CD8-positive, alpha-beta memory T cell (primary cell): ENCODE measurements at regions of chr6 and their contacts with region 1.

Region 1: GRCh38 chr6:1524040-1524480 is 85.7 kb upstream of the FOXC1 start:
- DNase-seq: peak; percentile 35 to 77 (median 72)
- H3K4me3 ChIP-seq: peak overlapping the region; percentile 59
- H3K4me3 Mint-ChIP-seq: peak overlapping the region; percentile 58 to 77 (median 70)
- H3K27ac ChIP-seq: no peak overlapping the region
- H3K27ac Mint-ChIP-seq: peak overlapping the region in 7 of 8 donors; percentile 38 to 91 (median 69)
- H3K4me1 ChIP-seq: peaks cover 55% of the 10 kb centered on the region
- H3K4me1 Mint-ChIP-seq: peaks cover 28 to 37% (median 34%) of the 10 kb centered on the region in 3 donors
- H3K27me3 ChIP-seq: no peaks in the 10 kb centered on the region
- H3K27me3 Mint-ChIP-seq: peaks cover 5 to 28% of the 10 kb centered on the region in 2 donors

Region 2: DNA sequence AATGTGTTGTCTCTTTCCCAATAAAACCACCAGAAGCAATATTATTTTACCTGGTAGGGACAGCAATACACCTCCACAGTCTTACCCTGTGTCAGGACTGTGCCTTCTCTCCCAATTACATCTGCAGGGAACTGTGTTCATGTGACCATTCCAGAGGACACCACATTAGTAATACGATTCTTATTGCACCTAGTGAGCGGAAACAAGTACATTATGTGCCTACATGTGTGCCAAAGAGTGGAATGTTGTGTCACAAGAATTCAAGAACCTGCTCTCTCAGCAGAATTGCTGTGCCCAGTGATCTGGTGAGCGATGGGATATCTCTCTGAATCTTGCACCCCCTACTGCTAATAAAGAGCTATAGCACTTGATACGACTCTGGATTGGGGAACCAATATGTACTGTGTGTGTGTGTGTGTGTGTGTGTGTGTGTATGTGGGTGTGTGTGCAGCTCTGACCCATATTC is 28.3 kb after region 1 on chr6:
- CTCF ChIA-PET with region 1: interaction called, 21 read pairs
- POLR2A ChIA-PET with region 1: no interaction called
- DNase-seq: peak in 1 of 5 donors; percentile 18
- H3K4me3 ChIP-seq: no peak overlapping the region
- H3K4me3 Mint-ChIP-seq: no peak overlapping the region
- H3K27ac ChIP-seq: no peak overlapping the region
- H3K27ac Mint-ChIP-seq: peak overlapping the region in 2 of 8 donors; percentile 26 to 57
- H3K4me1 ChIP-seq: no peaks in the 10 kb centered on the region
- H3K4me1 Mint-ChIP-seq: peaks cover 11 to 28% (median 26%) of the 10 kb centered on the region in 3 donors
- H3K27me3 ChIP-seq: no peaks in the 10 kb centered on the region
- H3K27me3 Mint-ChIP-seq: peaks cover 5 to 49% of the 10 kb centered on the region in 2 donors

Region 3: GRCh38 chr6:1558388-1558787 is 34.3 kb after region 1 on chr6:
- CTCF ChIA-PET with region 1: interaction called, 21 read pairs
- POLR2A ChIA-PET with region 1: no interaction called
- DNase-seq: no peak
- H3K4me3 ChIP-seq: no peak overlapping the region
- H3K4me3 Mint-ChIP-seq: no peak overlapping the region
- H3K27ac ChIP-seq: no peak overlapping the region
- H3K27ac Mint-ChIP-seq: no peak overlapping the region
- H3K4me1 ChIP-seq: no peaks in the 10 kb centered on the region
- H3K4me1 Mint-ChIP-seq: peaks cover 11 to 21% (median 19%) of the 10 kb centered on the region in 3 donors
- H3K27me3 ChIP-seq: no peaks in the 10 kb centered on the region
- H3K27me3 Mint-ChIP-seq: peaks cover 7 to 69% of the 10 kb centered on the region in 2 donors

Region 4: DNA sequence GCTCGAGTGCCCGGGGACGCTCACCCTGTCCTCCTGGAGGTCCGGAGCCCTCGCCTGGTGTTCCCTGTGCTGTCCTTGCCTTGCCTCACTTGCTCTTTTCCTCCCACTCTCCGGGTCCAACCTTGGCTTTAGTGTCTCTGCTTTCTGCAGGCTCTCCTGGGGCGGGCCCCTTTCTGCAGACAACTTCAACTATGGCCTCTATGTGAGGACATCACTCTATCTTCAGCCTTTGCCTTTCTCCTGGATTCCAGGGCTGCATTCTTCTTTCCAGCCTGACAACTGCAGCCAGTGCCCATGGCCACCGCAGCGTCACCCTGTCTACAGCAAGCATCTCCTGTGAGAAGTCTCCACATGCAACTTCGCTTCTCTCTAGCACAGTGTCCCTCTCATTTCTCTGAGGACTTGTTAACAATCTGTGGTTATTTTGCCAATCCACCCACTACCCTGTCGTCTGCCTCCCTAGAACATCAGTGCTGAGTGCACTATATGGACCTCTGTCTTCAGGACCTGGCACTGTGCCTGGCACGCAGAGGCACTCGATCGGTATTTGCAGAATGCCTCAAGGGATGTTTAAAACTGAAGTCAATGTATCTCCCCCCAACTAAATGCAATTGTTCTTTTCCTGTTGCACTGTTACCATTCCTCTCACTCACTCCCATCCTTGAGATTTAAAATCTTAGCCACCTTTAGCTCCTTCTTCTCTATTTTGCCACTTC is 121.6 kb after region 1 on chr6:
- CTCF ChIA-PET with region 1: no interaction called
- POLR2A ChIA-PET with region 1: no interaction called
- DNase-seq: no peak
- H3K4me3 ChIP-seq: no peak overlapping the region
- H3K4me3 Mint-ChIP-seq: no peak overlapping the region
- H3K27ac ChIP-seq: no peak overlapping the region
- H3K27ac Mint-ChIP-seq: no peak overlapping the region
- H3K4me1 ChIP-seq: no peaks in the 10 kb centered on the region
- H3K4me1 Mint-ChIP-seq: no peaks in the 10 kb centered on the region
- H3K27me3 ChIP-seq: no peaks in the 10 kb centered on the region
- H3K27me3 Mint-ChIP-seq: no peaks in the 10 kb centered on the region